ENCODE measurements at regions of chr15 and their contacts with region 1.

Region 1: GRCh38 chr15:66603301-66604179 is 37.7 kb upstream of the LCTL start:
- DNase-seq: peak; percentile 86
- H3K4me3 ChIP-seq: no peak overlapping the region
- H3K27ac ChIP-seq: no peak overlapping the region
- H3K4me1 ChIP-seq: no peaks in the 10 kb centered on the region; a peak in 1 of 4 replicates
- H3K27me3 ChIP-seq: no peaks in the 10 kb centered on the region
- CTCF ChIP-seq: peak; percentile 73
- EP300 ChIP-seq: no peak
- RAD21 ChIP-seq: peak; percentile 96

Region 2: GRCh38 chr15:66065325-66065724 is 538.2 kb before region 1 on chr15:
- CTCF ChIA-PET with region 1: no interaction called
- POLR2A ChIA-PET with region 1: no interaction called
- DNase-seq: no peak
- H3K4me3 ChIP-seq: no peak overlapping the region
- H3K27ac ChIP-seq: no peak overlapping the region
- H3K4me1 ChIP-seq: peaks cover 0 to 11% of the 10 kb centered on the region in 2 experiments; a peak in 1 of 4 replicates
- H3K27me3 ChIP-seq: peaks cover 6% of the 10 kb centered on the region; the same call in 1 of the 2 replicates
- CTCF ChIP-seq: no peak
- EP300 ChIP-seq: no peak
- RAD21 ChIP-seq: no peak

Region 3: DNA sequence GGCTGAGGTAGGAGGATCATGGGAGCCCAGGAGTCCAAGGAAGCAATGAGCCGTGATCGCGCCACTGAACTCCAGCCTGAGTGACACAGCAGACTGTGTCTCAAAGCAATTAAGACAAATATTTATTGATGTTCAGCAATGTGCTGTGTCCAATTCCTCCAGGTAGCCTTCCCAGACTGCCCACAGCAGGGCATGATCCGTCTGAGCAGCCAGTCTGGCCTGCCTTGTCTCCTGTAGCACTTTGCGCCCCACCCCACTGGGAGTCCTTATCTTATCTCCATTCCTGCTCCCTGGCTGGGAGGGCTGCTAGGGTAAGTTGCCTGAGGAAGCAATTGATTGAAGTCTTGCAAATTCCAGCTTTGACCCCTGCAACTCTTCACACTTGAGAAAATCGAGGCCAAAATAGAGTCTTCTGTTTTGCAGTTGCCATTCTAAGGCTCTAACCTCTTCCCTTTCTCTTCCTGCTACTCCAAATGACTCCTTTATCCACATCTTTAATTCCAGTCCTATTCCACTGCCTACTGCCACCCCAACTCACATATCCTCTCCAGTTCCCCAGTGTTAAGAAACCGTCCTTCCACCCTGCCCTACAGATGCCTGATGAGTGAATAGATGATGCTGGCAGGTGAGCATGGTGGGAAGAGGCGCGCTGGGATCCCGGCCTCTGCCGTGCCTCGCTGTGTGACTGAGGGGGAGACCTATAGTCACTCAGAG is 10.9 kb before region 1 on chr15:
- CTCF ChIA-PET with region 1: interaction called, 16 read pairs
- POLR2A ChIA-PET with region 1: no interaction called
- DNase-seq: no peak
- H3K4me3 ChIP-seq: no peak overlapping the region
- H3K27ac ChIP-seq: no peak overlapping the region
- H3K4me1 ChIP-seq: peaks cover 0 to 16% of the 10 kb centered on the region in 2 experiments; a peak in 2 of 4 replicates
- H3K27me3 ChIP-seq: no peaks in the 10 kb centered on the region
- CTCF ChIP-seq: no peak
- EP300 ChIP-seq: no peak
- RAD21 ChIP-seq: no peak

Region 4: DNA sequence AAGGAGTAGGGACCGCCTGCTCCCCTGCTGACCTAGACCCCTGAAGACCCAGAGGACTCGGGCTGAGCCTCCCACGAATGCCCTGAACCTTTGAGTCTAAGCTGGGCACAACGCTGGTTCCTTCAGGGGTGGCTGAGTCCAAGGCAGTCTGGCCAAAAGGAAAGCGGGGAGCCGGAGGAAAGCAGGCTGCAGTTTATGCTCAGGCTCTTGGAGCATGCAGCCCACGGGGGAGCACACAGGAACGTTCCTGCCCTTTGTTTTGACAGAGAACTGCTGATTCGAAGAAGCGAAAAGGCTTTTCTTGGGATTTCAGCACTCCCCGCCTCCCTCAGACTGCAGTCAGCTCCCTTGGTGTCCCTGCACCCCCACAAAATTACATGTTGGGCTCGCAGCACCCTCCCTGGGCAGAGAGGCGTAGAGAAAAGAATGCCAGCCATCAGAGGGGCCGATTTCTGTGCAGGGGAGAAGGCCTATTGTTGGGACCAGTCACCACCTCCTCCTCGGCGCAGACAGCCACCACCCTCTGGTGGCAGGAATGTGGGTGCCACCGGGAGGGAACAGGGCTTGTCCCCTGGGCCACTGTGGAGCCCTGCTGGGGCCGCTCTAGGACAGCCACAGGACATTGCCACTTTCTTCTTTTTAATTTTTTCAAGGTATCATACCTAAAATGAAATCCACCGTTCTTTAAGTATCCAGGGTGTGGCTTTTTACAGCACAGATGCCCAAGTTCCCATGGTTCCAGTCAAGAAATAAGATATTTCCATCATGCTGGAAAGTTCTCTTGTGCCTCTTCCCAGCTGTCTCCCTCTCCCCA is 170.7 kb after region 1 on chr15:
- CTCF ChIA-PET with region 1: interaction called, 28 read pairs
- POLR2A ChIA-PET with region 1: no interaction called
- DNase-seq: peak; percentile 95
- H3K4me3 ChIP-seq: peak overlapping the region in 1 of 2 experiments; percentile 19; a peak in 1 of 4 replicates
- H3K27ac ChIP-seq: peak overlapping the region; percentile 62 to 81
- H3K4me1 ChIP-seq: peaks cover 31 to 50% of the 10 kb centered on the region in 2 experiments
- H3K27me3 ChIP-seq: no peaks in the 10 kb centered on the region
- CTCF ChIP-seq: peak; percentile 92
- EP300 ChIP-seq: no peak
- RAD21 ChIP-seq: peak; percentile 92

Region 5: GRCh38 chr15:66862878-66863335 is 259.4 kb after region 1 on chr15:
- CTCF ChIA-PET with region 1: interaction called, 13 read pairs
- POLR2A ChIA-PET with region 1: no interaction called
- DNase-seq: peak; percentile 78
- H3K4me3 ChIP-seq: no peak overlapping the region
- H3K27ac ChIP-seq: no peak overlapping the region
- H3K4me1 ChIP-seq: peaks cover 0 to 13% of the 10 kb centered on the region in 2 experiments; a peak in 3 of 4 replicates
- H3K27me3 ChIP-seq: no peaks in the 10 kb centered on the region
- CTCF ChIP-seq: peak; percentile 94
- EP300 ChIP-seq: no peak
- RAD21 ChIP-seq: peak; percentile 72

Measured in SK-N-SH (cell line).